ENCODE measurements at regions of chr14 and their contacts with region 1.

Region 1: DNA sequence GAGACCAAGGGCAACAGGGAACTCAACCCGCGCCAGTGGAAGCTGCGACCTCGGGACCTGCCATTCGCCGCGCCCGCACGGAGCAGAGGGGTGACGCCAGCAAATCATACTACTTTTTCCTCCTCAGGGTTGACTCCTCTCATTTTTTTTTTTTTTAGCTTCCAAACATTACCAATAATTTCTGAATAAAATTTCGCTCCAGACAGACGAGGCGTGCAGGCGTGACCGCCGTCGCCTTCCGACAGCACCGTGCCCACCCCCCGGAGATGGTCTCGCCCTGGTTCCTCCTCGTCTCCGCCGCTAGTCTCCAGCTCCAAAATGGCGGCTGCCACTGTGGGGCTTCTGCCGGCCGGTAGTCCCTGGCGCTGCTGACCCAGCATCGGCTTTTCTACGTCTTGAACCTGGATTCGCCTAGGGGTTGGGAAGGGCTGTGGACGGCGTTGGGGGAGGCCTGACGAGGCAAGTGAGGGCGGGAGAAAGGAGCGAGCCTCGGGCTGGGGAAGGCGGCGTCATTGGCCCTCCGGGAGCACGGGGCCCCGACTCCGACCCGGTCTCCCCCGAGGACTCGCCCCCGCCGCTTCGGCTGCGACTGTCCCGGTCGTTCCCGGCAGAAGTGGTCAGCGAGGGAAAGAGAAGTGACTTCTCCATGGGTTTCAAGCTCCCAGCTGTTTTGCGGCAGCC is at the starts of genes CPSF2 and NDUFB1:
- DNase-seq: peak; percentile 71 to 80 (median 77)
- H3K4me3 ChIP-seq: peak within 1 kb of the TSS; percentile 62 to 93 (median 92)
- H3K4me3 Mint-ChIP-seq: peak within 1 kb of the TSS; percentile 97 to 100
- H3K27ac ChIP-seq: peak within 1 kb of the TSS; percentile 94 to 95
- H3K27ac Mint-ChIP-seq: peak within 1 kb of the TSS; percentile 99 to 100 (median 100)
- H3K4me1 ChIP-seq: peaks cover 25 to 34% of the 10 kb centered on the region in 2 donors
- H3K4me1 Mint-ChIP-seq: peaks cover 40% of the 10 kb centered on the region
- H3K27me3 ChIP-seq: no peaks in the 10 kb centered on the region
- H3K27me3 Mint-ChIP-seq: no peaks in the 10 kb centered on the region
- CTCF ChIP-seq: no peak
- polyA plus RNA-seq, gene CPSF2: 8.5 to 44.9 (median 25.5) TPM
- polyA plus RNA-seq, gene NDUFB1: 367 to 686 (median 604) TPM

Region 2: DNA sequence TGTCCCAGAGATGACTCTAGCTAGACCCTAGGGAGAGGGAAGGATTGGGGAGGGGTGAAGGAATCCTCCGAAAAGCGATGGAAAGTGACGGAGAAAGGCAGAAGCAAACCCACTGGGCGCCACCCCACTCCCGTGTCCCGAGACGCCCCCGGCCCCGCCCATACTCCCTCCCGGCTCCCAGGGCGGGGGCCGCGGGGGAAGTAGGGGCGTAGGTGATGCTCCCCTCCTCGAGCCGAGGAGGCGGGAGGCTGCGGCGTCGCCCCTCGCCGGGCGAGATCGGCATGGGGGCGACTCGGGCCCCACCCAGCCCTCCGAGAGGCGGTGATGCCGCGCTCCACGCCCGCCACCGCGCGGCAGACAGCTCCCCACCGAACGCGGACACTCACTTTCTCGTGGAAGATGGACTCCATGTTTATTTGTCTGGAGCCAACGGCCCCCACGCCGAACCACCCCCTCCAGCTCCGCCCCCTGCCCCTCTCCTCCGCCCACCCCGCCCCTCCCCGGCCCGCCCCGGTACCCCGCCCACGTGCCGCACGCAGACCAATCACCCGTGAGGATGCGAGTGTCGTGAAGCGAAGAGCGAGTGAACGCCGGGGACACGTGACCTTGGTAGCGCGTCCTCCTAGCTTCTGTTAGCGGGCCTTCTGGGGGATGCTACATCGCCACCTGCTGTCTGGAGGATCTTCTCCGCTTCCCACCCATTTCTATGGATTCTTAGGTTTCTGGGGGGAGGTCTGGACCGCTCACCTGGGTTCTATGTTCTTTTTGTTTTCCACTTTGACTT is 15.5 kb before region 1 on chr14 and contains the start of gene ATXN3:
- intact Hi-C with region 1: loop called in 1 of 2 experiments (anchors 2 kb)
- DNase-seq: peak; percentile 98
- H3K4me3 ChIP-seq: peak within 1 kb of the TSS; percentile 75 to 99 (median 96)
- H3K4me3 Mint-ChIP-seq: peak within 1 kb of the TSS; percentile 100
- H3K27ac ChIP-seq: peak within 1 kb of the TSS; percentile 85 to 95
- H3K27ac Mint-ChIP-seq: peak within 1 kb of the TSS; percentile 97 to 100 (median 99)
- H3K4me1 ChIP-seq: peaks cover 15 to 26% of the 10 kb centered on the region in 2 donors
- H3K4me1 Mint-ChIP-seq: peaks cover 32% of the 10 kb centered on the region
- H3K27me3 ChIP-seq: no peaks in the 10 kb centered on the region
- H3K27me3 Mint-ChIP-seq: peaks cover 0 to 3% (median 0%) of the 10 kb centered on the region in 3 donors
- CTCF ChIP-seq: peak; percentile 76
- polyA plus RNA-seq, gene ATXN3: 17.7 to 24.0 (median 18.5) TPM

Region 3: DNA sequence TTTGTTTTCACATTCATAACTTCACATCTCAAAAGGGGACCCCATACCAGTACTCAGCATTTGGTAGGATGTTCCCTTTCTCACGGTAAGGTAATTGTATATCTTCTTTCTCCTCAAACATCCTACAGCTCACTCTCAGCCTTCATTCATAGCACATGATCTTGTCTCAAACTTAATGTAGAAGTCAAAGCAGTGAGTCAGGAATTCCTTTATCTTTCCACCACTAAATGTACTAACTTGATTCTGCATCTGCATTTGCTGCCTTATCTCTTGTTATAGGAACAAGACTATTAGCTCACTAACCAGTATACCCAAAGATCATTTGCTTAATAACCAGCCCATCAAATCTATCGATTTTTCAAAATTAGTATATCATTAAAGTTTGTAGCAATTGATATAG is 22.9 kb after region 1 on chr14:
- intact Hi-C with region 1: no loop called
- DNase-seq: no peak
- H3K4me3 ChIP-seq: no peak overlapping the region
- H3K4me3 Mint-ChIP-seq: no peak overlapping the region
- H3K27ac ChIP-seq: no peak overlapping the region
- H3K27ac Mint-ChIP-seq: no peak overlapping the region
- H3K4me1 ChIP-seq: no peaks in the 10 kb centered on the region
- H3K4me1 Mint-ChIP-seq: no peaks in the 10 kb centered on the region
- H3K27me3 ChIP-seq: no peaks in the 10 kb centered on the region
- H3K27me3 Mint-ChIP-seq: no peaks in the 10 kb centered on the region
- CTCF ChIP-seq: no peak

Region 4: DNA sequence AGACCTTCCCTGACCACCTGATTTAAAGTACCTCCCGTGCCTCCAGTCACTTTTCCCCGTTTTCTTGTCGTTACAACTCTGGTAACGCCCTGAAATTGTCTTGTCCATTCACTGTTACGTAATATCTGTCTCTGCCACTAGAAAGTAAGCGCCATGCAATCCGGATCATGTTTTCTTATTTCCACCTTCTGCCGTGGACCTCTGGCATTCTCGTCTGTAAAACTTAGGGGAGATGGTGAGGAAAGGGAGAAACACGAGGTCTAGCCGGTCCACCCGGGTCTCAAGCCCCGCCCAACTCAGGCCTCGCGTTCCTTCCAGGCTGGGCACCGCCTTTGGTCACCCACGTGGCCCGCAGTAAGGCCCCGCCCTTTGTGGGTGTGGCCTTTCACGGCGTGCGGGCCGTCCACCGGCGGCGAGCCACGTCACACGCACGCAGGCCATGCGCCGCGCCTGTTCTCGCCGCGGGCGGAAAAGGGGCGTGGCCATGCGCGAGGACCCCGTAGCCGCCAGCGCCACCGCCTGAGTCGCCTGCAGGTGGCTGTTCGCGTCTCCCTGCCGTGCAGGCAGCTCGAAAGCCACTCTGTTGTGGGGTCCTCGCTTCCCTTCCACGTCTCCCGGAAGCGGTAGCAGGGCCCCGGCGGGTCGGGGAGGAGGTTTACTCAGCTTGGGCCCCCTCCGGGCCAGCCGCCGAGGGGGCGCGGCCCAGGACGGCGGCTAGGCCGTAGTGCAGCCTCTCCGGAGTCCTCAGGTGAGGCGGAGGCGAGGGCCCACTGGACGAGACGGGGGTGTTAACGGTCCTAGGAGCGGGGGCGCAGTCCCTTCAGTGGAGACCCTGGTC is 672.1 kb after region 1 on chr14 and contains the start of gene GOLGA5:
- intact Hi-C with region 1: loop called in 1 of 2 experiments (anchors 10 kb)
- DNase-seq: peak; percentile 97 to 99 (median 99)
- H3K4me3 ChIP-seq: peak within 1 kb of the TSS; percentile 91 to 99 (median 94)
- H3K4me3 Mint-ChIP-seq: peak within 1 kb of the TSS; percentile 94 to 98
- H3K27ac ChIP-seq: peak within 1 kb of the TSS; percentile 90 to 97
- H3K27ac Mint-ChIP-seq: peak within 1 kb of the TSS; percentile 90 to 98 (median 97)
- H3K4me1 ChIP-seq: peaks cover 21 to 27% of the 10 kb centered on the region in 2 donors
- H3K4me1 Mint-ChIP-seq: peaks cover 27% of the 10 kb centered on the region
- H3K27me3 ChIP-seq: no peaks in the 10 kb centered on the region
- H3K27me3 Mint-ChIP-seq: no peaks in the 10 kb centered on the region
- CTCF ChIP-seq: no peak
- polyA plus RNA-seq, gene GOLGA5: 12.4 to 19.0 (median 16.3) TPM

Measured in CD14-positive monocyte (primary cell).